Tibial artery (tissue), 4 donors: ENCODE measurements at regions of chr1 and their contacts with region 1.

Region 1: DNA sequence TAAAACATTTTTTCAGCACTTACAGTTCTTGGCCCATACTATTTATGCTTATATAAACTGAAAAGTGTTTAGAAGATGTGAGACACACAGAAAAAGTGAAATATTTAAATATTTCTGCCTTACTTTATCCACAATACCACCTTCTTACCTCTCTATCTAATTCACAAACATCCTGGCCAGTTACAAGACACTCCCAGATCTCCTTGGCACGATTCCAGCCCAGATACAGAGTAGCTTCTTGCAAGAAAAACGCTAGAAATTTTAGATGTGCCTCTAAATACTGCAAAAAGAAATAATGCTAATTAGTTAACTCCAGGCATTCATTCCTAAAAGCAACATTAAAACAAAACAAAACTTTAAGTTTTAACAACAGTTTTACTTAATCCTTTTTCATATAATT is 68.4 kb downstream of the USP24 start:
- DNase-seq: no peak
- H3K4me3 ChIP-seq: no peak overlapping the region
- H3K27ac ChIP-seq: no peak overlapping the region
- H3K4me1 ChIP-seq: no peaks in the 10 kb centered on the region
- H3K27me3 ChIP-seq: no peaks in the 10 kb centered on the region
- CTCF ChIP-seq: no peak

Region 2: GRCh38 chr1:56584910-56585528 is 1438.2 kb after region 1 on chr1:
- intact Hi-C with region 1: loop called (anchors 5 kb)
- DNase-seq: no peak
- H3K4me3 ChIP-seq: no peak overlapping the region
- H3K27ac ChIP-seq: peak overlapping the region in 1 of 2 donors; percentile 10
- H3K4me1 ChIP-seq: peaks cover 0 to 9% (median 4%) of the 10 kb centered on the region in 4 donors
- H3K27me3 ChIP-seq: no peaks in the 10 kb centered on the region
- CTCF ChIP-seq: peak; percentile 89